B cell (primary cell): ENCODE measurements at regions of chr6 and their contacts with region 1.

Region 1: GRCh38 chr6:130322673-130323268 is 43.0 kb upstream of the TMEM200A start:
- DNase-seq: peak; percentile 67
- ATAC-seq: no peak
- H3K4me3 ChIP-seq: no peak overlapping the region
- H3K4me3 Mint-ChIP-seq: no peak overlapping the region
- H3K27ac ChIP-seq: no peak overlapping the region
- H3K27ac Mint-ChIP-seq: no peak overlapping the region
- H3K4me1 ChIP-seq: no peaks in the 10 kb centered on the region
- H3K4me1 Mint-ChIP-seq: no peaks in the 10 kb centered on the region
- H3K27me3 ChIP-seq: no peaks in the 10 kb centered on the region
- H3K27me3 Mint-ChIP-seq: no peaks in the 10 kb centered on the region
- CTCF ChIP-seq: peak; percentile 95

Region 2: GRCh38 chr6:129785047-129785755 is 537.6 kb before region 1 on chr6:
- CTCF ChIA-PET with region 1: no interaction called
- POLR2A ChIA-PET with region 1: no interaction called
- intact Hi-C with region 1: no loop called
- DNase-seq: no peak
- ATAC-seq: no peak
- H3K4me3 ChIP-seq: no peak overlapping the region
- H3K4me3 Mint-ChIP-seq: no peak overlapping the region
- H3K27ac ChIP-seq: no peak overlapping the region
- H3K27ac Mint-ChIP-seq: no peak overlapping the region
- H3K4me1 ChIP-seq: no peaks in the 10 kb centered on the region
- H3K4me1 Mint-ChIP-seq: no peaks in the 10 kb centered on the region
- H3K27me3 ChIP-seq: peaks cover 0 to 2% (median 0%) of the 10 kb centered on the region in 4 experiments
- H3K27me3 Mint-ChIP-seq: peaks cover 10% of the 10 kb centered on the region
- CTCF ChIP-seq: no peak

Region 3: DNA sequence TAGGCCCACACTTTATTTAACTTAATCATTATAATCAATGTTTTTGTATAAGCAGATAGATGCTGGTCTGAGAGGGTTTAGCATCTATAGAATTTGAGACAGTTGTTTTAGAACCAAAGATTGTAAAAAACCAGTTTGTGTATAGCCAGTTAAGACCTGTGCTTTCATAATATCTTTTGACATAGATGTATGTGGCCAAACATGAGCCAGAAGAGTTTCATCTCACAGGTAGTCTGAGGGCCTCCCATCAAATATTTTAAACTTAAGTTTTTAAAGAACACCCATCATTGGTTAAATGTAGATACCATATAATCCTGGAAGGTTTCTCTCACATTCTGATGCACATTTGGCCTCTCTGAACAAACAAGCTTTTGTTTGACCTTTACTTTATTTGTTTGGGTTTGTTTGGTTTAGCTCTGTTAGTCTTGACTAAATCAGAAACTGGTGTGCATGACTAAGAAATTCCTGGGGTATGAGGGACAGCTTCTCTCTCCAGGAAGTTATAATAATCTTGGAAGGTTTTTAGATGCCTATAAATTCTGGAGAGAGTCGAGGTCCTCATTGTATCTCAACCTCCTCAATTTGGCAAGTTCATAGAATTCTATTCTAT is 14.9 kb before region 1 on chr6:
- CTCF ChIA-PET with region 1: interaction called, 10 read pairs
- POLR2A ChIA-PET with region 1: no interaction called
- intact Hi-C with region 1: no loop called
- DNase-seq: no peak
- ATAC-seq: no peak
- H3K4me3 ChIP-seq: no peak overlapping the region
- H3K4me3 Mint-ChIP-seq: no peak overlapping the region
- H3K27ac ChIP-seq: no peak overlapping the region
- H3K27ac Mint-ChIP-seq: no peak overlapping the region
- H3K4me1 ChIP-seq: peaks cover 0 to 3% of the 10 kb centered on the region in 2 donors
- H3K4me1 Mint-ChIP-seq: peaks cover 5% of the 10 kb centered on the region
- H3K27me3 ChIP-seq: no peaks in the 10 kb centered on the region
- H3K27me3 Mint-ChIP-seq: no peaks in the 10 kb centered on the region
- CTCF ChIP-seq: no peak

Region 4: DNA sequence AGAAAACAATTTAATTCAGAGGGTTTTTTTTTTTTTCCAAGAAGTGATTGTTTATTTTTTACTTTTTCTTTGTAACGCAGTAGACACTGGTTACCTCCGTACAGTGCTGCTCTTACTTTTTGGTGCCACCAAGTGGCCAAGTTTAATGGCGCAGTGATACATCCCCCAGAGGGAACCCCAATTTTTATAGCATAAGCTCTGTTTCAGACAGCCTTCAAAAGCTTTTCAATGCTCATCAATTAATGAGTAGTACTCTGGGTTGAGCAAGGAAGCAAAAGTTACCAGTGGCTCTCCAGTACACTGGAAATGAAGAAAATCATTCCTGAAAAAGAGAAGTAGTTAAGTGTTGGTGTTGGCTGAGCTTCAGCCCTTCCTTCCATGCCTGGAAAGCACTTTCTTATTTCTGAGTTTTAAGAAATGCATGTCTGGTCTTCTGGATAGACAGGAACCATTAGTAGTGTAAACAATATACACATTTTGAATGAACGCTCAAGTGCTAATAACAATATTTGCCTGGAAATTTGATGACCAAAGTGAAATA is 375.3 kb after region 1 on chr6:
- CTCF ChIA-PET with region 1: interaction called, 17 read pairs
- POLR2A ChIA-PET with region 1: no interaction called
- intact Hi-C with region 1: no loop called
- DNase-seq: peak; percentile 52
- ATAC-seq: peak; percentile 63
- H3K4me3 ChIP-seq: no peak overlapping the region
- H3K4me3 Mint-ChIP-seq: no peak overlapping the region
- H3K27ac ChIP-seq: no peak overlapping the region
- H3K27ac Mint-ChIP-seq: no peak overlapping the region
- H3K4me1 ChIP-seq: peaks cover 0 to 4% of the 10 kb centered on the region in 2 donors
- H3K4me1 Mint-ChIP-seq: peaks cover 1% of the 10 kb centered on the region
- H3K27me3 ChIP-seq: no peaks in the 10 kb centered on the region
- H3K27me3 Mint-ChIP-seq: peaks cover 10% of the 10 kb centered on the region
- CTCF ChIP-seq: peak; percentile 75

Region 5: DNA sequence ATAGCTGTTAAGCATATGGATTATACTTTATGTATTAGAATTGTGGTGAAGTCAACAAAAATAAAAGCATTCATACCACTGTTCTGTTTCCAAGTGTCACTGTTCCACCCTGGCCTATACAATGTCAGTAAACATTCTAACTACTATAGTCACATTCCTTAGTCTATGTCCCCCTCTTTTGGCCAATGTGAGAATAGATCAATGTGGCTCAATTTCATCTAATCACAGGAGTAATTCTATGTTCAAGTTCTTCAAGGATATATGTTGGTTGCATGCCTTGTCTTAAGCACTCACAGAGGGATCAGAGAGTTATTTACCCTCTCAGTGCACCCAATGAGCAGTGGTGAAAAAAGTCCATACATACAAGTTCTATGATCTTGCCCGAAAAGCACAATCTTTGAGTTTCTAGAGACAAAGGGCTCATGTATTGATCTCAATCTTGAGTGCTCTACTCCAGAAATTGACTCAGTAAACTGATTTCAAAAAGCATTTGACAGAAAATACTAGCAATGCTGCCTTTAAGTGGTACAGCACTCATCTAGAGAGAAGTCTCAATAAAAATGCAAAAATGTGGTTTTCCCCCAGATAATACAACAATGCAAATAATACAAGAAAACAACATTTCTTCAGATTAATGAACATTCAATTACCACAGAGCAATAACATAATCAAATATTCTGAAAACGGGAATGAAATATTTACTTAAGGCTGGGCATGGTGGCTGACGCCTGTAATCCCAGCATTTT is 521.0 kb after region 1 on chr6:
- CTCF ChIA-PET with region 1: interaction called, 15 read pairs
- POLR2A ChIA-PET with region 1: no interaction called
- intact Hi-C with region 1: loop called (anchors 1 kb)
- DNase-seq: peak; percentile 52
- ATAC-seq: peak; percentile 39
- H3K4me3 ChIP-seq: no peak overlapping the region
- H3K4me3 Mint-ChIP-seq: no peak overlapping the region
- H3K27ac ChIP-seq: no peak overlapping the region
- H3K27ac Mint-ChIP-seq: no peak overlapping the region
- H3K4me1 ChIP-seq: peaks cover 12 to 19% of the 10 kb centered on the region in 2 donors
- H3K4me1 Mint-ChIP-seq: peaks cover 21% of the 10 kb centered on the region
- H3K27me3 ChIP-seq: no peaks in the 10 kb centered on the region
- H3K27me3 Mint-ChIP-seq: no peaks in the 10 kb centered on the region
- CTCF ChIP-seq: peak; percentile 61

Region 6: DNA sequence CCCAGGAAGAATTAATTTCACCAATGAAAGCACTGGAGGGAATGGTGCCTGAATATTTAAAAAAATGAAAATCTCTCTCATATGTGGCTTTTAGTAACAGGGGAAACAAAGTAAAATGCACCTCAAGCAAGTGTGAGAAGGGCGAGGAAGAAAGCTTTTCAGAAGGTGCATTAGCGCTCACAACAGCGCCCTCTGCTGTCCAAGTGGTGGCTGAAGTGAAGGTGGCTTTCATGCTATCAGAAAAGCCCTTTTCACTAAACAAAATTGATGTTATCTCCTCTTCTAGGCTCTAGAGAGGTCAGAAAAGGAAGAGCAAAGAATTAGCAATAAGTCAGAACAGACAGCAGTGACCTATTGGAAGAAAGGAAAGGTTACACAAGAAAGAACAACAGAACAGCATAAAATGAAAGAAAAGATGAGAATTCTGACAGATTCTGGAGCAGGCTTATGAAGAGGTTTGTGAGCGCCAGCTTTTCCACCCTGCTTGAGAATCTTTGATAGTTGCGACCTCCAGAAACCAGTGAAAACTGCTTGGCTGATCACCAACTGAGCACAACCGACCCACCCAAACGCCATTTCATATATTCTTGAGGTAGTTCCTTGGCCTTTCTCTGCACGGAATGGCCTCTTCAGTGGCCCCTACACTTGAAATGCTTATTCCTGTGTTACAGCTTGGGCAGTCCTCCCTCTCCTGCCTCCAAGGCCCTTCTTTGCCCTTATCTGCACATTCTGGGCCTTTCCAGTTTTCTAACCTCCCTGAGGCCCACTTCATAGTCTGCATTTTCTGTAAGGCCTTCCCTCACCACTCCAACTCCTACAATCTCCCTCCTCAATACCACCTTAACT is 549.7 kb after region 1 on chr6:
- CTCF ChIA-PET with region 1: interaction called, 37 read pairs
- POLR2A ChIA-PET with region 1: no interaction called
- intact Hi-C with region 1: loop called (anchors 1 kb)
- DNase-seq: peak; percentile 72
- ATAC-seq: peak; percentile 43
- H3K4me3 ChIP-seq: no peak overlapping the region
- H3K4me3 Mint-ChIP-seq: no peak overlapping the region
- H3K27ac ChIP-seq: no peak overlapping the region
- H3K27ac Mint-ChIP-seq: no peak overlapping the region
- H3K4me1 ChIP-seq: no peaks in the 10 kb centered on the region
- H3K4me1 Mint-ChIP-seq: no peaks in the 10 kb centered on the region
- H3K27me3 ChIP-seq: no peaks in the 10 kb centered on the region
- H3K27me3 Mint-ChIP-seq: no peaks in the 10 kb centered on the region
- CTCF ChIP-seq: peak; percentile 98